Lower leg skin (tissue), 4 donors: ENCODE measurements at regions of chr2 and their contacts with region 1.

Region 1: DNA sequence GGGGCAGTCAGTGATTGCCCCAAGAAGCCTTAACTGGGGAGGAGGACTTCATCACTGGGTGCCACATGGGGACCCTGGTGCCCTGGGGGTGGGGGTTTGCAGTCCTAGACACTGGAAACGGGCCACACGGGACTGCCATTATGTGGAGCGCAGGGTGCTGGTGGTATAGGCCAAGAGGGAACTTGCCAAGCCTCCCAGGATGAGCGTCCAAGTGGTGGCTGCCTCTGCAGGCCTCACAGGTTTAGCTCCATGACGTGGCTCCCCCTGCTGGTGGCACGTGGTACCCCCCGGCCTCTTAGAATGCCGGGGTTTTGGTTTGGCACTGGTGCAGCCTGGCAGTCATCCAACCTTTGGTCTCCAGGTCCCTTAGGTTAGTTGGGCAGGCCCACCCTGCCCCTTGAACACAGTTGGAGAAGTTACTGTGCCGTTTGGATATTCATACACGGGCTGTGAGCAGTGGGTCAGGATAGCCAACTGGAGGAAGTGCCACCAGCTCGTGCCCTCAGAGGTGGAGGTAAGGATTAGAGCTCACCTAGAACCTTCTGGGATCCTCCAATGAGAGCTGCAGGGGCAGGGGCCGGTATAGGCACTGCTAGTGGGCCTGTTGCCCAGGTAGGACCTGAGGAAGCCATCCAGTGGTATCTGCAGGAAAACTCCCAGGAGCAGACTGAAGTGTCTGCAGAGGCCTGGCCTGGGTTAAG is 5.6 kb downstream of the PTMA start:
- DNase-seq: peak; percentile 86 to 98
- H3K4me3 ChIP-seq: no peak overlapping the region
- CTCF ChIP-seq: peak in 1 of 3 donors; percentile 79
- POLR2A ChIP-seq: no peak

Region 2: GRCh38 chr2:231563378-231563961 is 150.4 kb before region 1 on chr2:
- intact Hi-C with region 1: loop called (anchors 5 kb)
- DNase-seq: peak in 1 of 2 donors; percentile 35
- H3K4me3 ChIP-seq: no peak overlapping the region
- CTCF ChIP-seq: no peak
- POLR2A ChIP-seq: no peak

Region 3: DNA sequence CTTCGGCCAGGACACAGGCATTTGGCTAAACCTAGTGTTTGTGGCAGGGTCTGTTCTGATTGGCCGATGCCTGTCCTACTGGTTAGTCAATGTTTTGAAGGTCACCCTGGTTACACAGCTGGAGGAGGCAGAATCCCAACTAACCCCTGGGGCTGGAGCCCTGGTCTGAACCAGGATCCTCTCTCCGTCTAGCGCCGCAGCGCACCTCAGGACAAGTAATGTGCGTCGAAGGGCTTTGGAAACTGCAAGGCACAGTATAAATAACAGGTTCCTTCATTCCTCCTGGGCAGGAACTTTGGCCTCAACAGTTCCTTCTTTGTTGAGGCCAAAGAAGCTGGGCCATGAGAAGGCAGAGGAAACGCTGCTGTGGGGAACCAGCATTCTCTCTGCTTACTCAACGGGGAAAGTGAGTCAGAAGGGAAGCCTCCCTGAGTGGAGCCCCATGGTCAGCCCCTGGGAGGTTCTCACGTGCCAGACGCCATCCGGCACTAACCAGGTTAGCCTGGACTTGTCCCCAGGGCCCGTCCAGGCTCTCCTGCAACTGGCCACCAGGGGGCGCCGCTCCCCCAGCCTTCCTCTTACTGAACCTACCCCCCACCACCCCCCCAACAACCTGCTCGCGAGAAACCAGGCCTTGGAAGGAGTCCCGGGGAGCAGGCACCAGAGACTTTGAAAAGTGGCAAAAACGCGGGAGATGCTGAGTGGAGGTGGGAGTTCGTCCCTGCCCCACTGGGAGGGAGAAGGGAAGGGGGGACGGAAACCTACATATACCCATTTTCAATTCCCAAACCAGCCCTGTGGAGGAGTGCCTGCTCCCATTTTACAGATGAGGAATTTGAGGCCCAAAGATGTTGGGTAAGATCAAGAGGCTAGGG is 101.5 kb before region 1 on chr2:
- intact Hi-C with region 1: loop called (anchors 1 kb)
- DNase-seq: peak; percentile 95 to 99
- H3K4me3 ChIP-seq: no peak overlapping the region
- CTCF ChIP-seq: peak in 1 of 3 donors; percentile 94
- POLR2A ChIP-seq: no peak

Region 4: DNA sequence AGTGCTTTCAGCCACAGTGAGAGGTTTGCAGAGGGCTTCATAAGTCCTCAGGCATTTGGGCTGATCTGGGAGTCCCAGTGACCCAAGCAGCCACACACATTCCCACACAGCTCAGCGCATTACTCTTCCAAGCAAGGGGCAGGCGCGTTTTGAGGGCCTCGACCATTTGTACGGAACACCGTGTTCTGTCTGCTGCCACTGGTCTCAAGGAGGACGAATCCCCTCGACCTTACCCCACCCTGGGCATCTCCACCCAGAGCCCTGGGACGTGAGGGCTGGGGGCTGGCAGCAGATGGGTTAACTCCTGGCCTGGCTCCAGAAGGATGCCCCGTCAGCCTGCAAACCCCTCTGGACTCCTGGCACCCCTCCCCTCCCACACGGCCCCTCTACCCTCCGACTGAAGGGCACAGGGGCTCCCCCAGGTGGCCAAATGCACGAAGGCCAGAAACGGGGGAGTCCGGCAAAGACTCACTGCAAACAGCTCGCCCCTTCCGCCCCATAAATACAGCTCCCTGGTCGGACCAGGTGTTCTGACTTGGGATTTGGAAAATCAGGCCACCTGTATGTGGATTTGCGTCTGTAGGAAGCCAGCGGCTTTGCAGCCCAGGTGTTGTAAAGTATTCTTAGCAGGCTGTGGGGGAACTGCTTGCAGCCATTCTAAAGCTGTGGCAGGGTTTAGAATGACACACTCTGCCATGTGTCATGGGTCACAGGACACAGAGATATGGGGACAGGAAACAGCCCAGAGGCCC is 39.1 kb before region 1 on chr2:
- intact Hi-C with region 1: loop called (anchors 1 kb)
- DNase-seq: peak; percentile 58 to 93
- H3K4me3 ChIP-seq: no peak overlapping the region
- CTCF ChIP-seq: peak in 1 of 3 donors; percentile 15
- POLR2A ChIP-seq: no peak